Naive thymus-derived CD4-positive, alpha-beta T cell (primary cell): ENCODE measurements at regions of chr6 and their contacts with region 1.

Region 1: GRCh38 chr6:27157459-27158315 is 89.8 kb upstream of the PRSS16 start:
- DNase-seq: peak in 8 of 9 donors; percentile 77 to 92 (median 87)
- ATAC-seq: peak; percentile 86
- H3K4me3 ChIP-seq: peak overlapping the region; percentile 76
- H3K4me3 Mint-ChIP-seq: peak overlapping the region; percentile 82 to 94 (median 87)
- H3K27ac ChIP-seq: peak overlapping the region; percentile 54
- H3K27ac Mint-ChIP-seq: peak overlapping the region; percentile 80 to 96 (median 92)
- H3K4me1 ChIP-seq: peaks cover 12% of the 10 kb centered on the region in 2 donors
- H3K4me1 Mint-ChIP-seq: peaks cover 29 to 47% (median 43%) of the 10 kb centered on the region in 7 donors
- H3K27me3 ChIP-seq: no peaks in the 10 kb centered on the region
- H3K27me3 Mint-ChIP-seq: peaks cover 0 to 6% (median 0%) of the 10 kb centered on the region in 5 donors

Region 2: GRCh38 chr6:27126815-27127537 is 30.7 kb before region 1 on chr6:
- CTCF ChIA-PET with region 1: interaction called, 26 read pairs
- POLR2A ChIA-PET with region 1: interaction called, 795 read pairs
- intact Hi-C with region 1: loop called (anchors 1 kb)
- DNase-seq: peak; percentile 46 to 82 (median 77)
- ATAC-seq: peak; percentile 89
- H3K4me3 ChIP-seq: peak overlapping the region; percentile 33
- H3K4me3 Mint-ChIP-seq: peak overlapping the region; percentile 35 to 90 (median 77)
- H3K27ac ChIP-seq: no peak overlapping the region
- H3K27ac Mint-ChIP-seq: peak overlapping the region; percentile 41 to 93 (median 82)
- H3K4me1 ChIP-seq: peaks cover 4 to 6% of the 10 kb centered on the region in 2 donors
- H3K4me1 Mint-ChIP-seq: peaks cover 6 to 51% (median 15%) of the 10 kb centered on the region in 7 donors
- H3K27me3 ChIP-seq: no peaks in the 10 kb centered on the region
- H3K27me3 Mint-ChIP-seq: no peaks in the 10 kb centered on the region

Region 3: GRCh38 chr6:27177485-27178406 is 20.1 kb after region 1 on chr6:
- CTCF ChIA-PET with region 1: interaction called, 3 read pairs
- POLR2A ChIA-PET with region 1: interaction called, 7 read pairs
- intact Hi-C with region 1: loop called (anchors 1 kb)
- DNase-seq: peak; percentile 49 to 78 (median 66)
- ATAC-seq: peak; percentile 83
- H3K4me3 ChIP-seq: peak overlapping the region; percentile 99
- H3K4me3 Mint-ChIP-seq: peak overlapping the region; percentile 90 to 98 (median 96)
- H3K27ac ChIP-seq: peak overlapping the region; percentile 74
- H3K27ac Mint-ChIP-seq: peak overlapping the region; percentile 79 to 100 (median 95)
- H3K4me1 ChIP-seq: peaks cover 0 to 3% of the 10 kb centered on the region in 2 donors
- H3K4me1 Mint-ChIP-seq: peaks cover 0 to 33% (median 14%) of the 10 kb centered on the region in 7 donors
- H3K27me3 ChIP-seq: no peaks in the 10 kb centered on the region
- H3K27me3 Mint-ChIP-seq: peaks cover 0 to 37% (median 0%) of the 10 kb centered on the region in 5 donors

Region 4: DNA sequence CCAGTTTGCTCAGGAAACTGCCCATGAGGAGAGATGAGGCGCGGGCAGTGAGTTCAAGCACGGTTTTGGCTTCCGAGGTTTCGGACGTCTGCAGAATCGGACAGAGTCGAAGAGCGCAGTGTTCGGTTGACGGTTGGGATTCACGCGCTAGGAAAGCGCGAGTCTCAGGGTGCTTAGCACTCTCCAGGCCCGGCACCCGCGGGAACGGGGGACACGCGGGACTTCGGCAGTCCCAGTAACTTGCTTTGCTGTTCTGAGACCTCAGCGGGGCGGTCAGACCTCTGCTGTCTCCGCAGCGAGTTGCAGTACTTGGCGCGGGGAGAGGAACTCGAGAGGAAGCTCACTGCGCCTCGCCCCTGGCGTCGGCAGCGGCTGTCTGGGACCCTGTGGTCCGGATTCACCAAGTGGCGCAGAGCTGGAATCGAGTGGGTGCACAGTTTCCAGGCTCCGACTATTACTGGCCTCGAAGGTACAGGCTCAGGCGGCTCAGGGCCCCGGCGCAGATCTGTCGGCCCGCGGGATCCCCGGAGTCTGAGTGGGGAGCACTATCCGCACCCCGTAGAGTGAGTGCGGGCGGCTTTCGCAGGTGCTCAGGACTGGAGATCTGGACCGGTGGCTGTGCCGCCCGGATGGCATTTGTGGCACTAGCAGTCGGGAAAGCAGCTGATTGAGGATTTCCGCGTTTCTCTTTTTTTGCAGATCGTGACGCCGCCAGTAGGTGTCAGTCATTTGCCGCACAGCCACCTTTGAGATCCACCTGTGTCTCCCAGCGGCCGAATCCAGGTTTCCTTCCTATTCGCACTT is 154.7 kb after region 1 on chr6 and contains the start of gene POM121L2:
- CTCF ChIA-PET with region 1: no interaction called
- POLR2A ChIA-PET with region 1: no interaction called
- intact Hi-C with region 1: loop called (anchors 1 kb)
- DNase-seq: peak in 8 of 9 donors; percentile 26 to 61 (median 56)
- ATAC-seq: peak; percentile 66
- H3K4me3 ChIP-seq: peak within 1 kb of the TSS; percentile 80
- H3K4me3 Mint-ChIP-seq: peak within 1 kb of the TSS; percentile 76 to 86 (median 83)
- H3K27ac ChIP-seq: no peak within 1 kb of the TSS
- H3K27ac Mint-ChIP-seq: peak within 1 kb of the TSS in 2 of 9 donors; percentile 15 to 25
- H3K4me1 ChIP-seq: peaks cover 0 to 6% of the 10 kb centered on the region in 2 donors
- H3K4me1 Mint-ChIP-seq: peaks cover 0 to 13% (median 4%) of the 10 kb centered on the region in 7 donors
- H3K27me3 ChIP-seq: peaks cover 4 to 14% of the 10 kb centered on the region in 2 donors
- H3K27me3 Mint-ChIP-seq: peaks cover 63 to 81% (median 73%) of the 10 kb centered on the region in 5 donors
- total RNA-seq, gene POM121L2: not detected

Region 5: GRCh38 chr6:27608916-27609883 is 451.5 kb after region 1 on chr6:
- CTCF ChIA-PET with region 1: interaction called, 5 read pairs
- POLR2A ChIA-PET with region 1: no interaction called
- intact Hi-C with region 1: loop called (anchors 1 to 10 kb)
- DNase-seq: peak in 2 of 9 donors; percentile 19 to 33
- ATAC-seq: no peak
- H3K4me3 ChIP-seq: no peak overlapping the region
- H3K4me3 Mint-ChIP-seq: no peak overlapping the region
- H3K27ac ChIP-seq: no peak overlapping the region
- H3K27ac Mint-ChIP-seq: no peak overlapping the region
- H3K4me1 ChIP-seq: no peaks in the 10 kb centered on the region
- H3K4me1 Mint-ChIP-seq: peaks cover 0 to 17% (median 9%) of the 10 kb centered on the region in 7 donors
- H3K27me3 ChIP-seq: peaks cover 7 to 11% of the 10 kb centered on the region in 2 donors
- H3K27me3 Mint-ChIP-seq: peaks cover 44 to 73% (median 60%) of the 10 kb centered on the region in 5 donors

Region 6: GRCh38 chr6:27871924-27872638 is 714.4 kb after region 1 on chr6:
- CTCF ChIA-PET with region 1: no interaction called
- POLR2A ChIA-PET with region 1: interaction called, 12 read pairs
- intact Hi-C with region 1: no loop called
- DNase-seq: peak; percentile 68 to 97 (median 94)
- ATAC-seq: peak; percentile 88
- H3K4me3 ChIP-seq: peak overlapping the region; percentile 69
- H3K4me3 Mint-ChIP-seq: peak overlapping the region; percentile 83 to 99 (median 94)
- H3K27ac ChIP-seq: peak overlapping the region; percentile 84
- H3K27ac Mint-ChIP-seq: peak overlapping the region; percentile 95 to 98 (median 97)
- H3K4me1 ChIP-seq: peaks cover under 1 to 19% of the 10 kb centered on the region in 2 donors
- H3K4me1 Mint-ChIP-seq: peaks cover 15 to 69% (median 42%) of the 10 kb centered on the region in 7 donors
- H3K27me3 ChIP-seq: no peaks in the 10 kb centered on the region
- H3K27me3 Mint-ChIP-seq: peaks cover 0 to 8% (median 0%) of the 10 kb centered on the region in 5 donors